Left ventricle myocardium inferior (tissue), 1 donor: ENCODE measurements at regions of chr20 and their contacts with region 1.

Region 1: DNA sequence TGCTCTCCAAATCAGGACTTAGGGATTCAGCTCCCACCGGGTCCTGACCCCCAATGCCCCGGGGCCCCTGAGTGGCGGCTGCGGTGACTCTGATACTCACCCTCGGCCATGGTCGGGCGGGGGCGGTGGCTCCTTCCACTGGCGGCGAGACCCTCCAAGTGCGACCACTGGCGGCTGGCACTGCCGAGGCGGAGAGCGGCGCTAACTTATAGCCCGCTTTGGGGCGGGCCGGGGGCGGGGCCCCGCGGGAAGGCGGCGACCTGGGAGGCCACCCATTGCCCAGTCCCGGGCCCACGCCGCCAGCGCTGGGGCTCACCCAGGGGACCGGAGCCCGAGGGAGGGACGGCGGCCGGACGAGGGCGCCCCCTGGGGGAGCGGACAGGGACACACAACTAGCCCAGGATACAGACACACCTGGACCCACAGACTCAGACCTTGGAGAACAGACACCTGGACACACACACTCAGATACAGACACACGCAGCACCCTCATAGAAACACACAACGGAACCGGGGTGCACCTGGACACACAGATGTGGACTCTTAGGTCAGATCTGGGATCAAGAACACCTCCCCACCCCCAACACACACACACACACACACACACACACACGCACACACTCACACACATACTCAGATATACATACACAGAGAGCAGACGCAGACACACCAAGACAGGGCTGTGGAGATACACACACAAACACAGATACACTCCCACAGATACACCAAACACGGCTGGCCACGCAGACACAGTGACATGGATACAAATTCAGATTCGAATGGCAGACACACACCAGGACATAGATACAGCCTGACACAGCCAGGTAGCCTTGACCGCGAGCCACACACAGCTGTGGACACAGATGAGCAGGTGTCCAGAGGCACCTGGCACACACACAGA is at the start of gene TGM2:
- DNase-seq: peak; percentile 86
- H3K4me3 ChIP-seq: peak within 1 kb of the TSS; percentile 81
- H3K27ac ChIP-seq: peak within 1 kb of the TSS; percentile 93
- H3K4me1 ChIP-seq: peaks cover 66% of the 10 kb centered on the region
- H3K27me3 ChIP-seq: no peaks in the 10 kb centered on the region
- CTCF ChIP-seq: peak; percentile 91
- total RNA-seq, gene TGM2: 846 TPM

Region 2: GRCh38 chr20:38057351-38057972 is 107.9 kb before region 1 on chr20:
- intact Hi-C with region 1: loop called (anchors 5 kb)
- DNase-seq: peak; percentile 86
- H3K4me3 ChIP-seq: no peak overlapping the region
- H3K27ac ChIP-seq: no peak overlapping the region
- H3K4me1 ChIP-seq: peaks cover 42% of the 10 kb centered on the region
- H3K27me3 ChIP-seq: no peaks in the 10 kb centered on the region
- CTCF ChIP-seq: peak; percentile 89

Region 3: DNA sequence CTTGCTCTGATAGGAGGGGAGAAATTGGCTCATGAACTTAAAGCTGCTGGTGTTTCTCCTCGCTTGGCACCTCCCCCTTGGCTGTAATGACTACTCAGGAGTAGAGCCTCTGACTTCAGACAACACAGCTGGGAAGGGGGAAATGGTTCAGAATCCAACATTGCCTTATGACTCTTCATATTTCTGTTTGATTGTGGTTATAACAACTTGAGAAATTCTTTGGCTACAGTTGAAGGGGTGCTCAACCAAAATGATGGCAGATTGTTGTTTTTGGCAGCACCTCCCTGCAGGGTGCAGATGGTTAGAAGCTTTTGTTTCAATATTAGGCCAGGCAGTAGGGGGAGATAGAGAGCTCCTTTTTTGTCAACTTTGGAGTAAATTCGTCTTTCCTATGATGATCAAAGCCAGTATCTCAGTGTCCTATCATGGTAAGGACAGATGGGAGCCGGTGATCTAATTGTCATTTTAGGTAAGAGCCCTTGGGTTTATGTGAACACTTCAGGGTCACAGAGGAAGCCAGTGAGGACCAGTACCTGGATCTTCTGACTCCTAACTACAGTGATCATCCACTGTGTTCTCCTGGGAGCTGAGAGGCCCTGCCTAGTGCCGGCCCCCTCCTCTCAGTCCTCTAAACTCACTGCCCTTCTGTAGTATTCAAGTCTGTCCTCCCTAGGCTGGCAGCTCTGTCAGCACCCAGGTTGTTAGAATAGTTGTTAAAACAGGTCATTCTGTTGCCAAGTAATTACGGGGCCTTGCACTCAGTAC is 91.8 kb before region 1 on chr20:
- intact Hi-C with region 1: loop called (anchors 5 kb)
- DNase-seq: peak; percentile 62
- H3K4me3 ChIP-seq: peak overlapping the region; percentile 2
- H3K27ac ChIP-seq: peak overlapping the region; percentile 91
- H3K4me1 ChIP-seq: peaks cover 58% of the 10 kb centered on the region
- H3K27me3 ChIP-seq: no peaks in the 10 kb centered on the region
- CTCF ChIP-seq: peak; percentile 83

Region 4: GRCh38 chr20:38350800-38351775 is 185.7 kb after region 1 on chr20:
- intact Hi-C with region 1: no loop called
- DNase-seq: peak; percentile 20
- H3K4me3 ChIP-seq: no peak overlapping the region
- H3K27ac ChIP-seq: no peak overlapping the region
- H3K4me1 ChIP-seq: no peaks in the 10 kb centered on the region
- H3K27me3 ChIP-seq: no peaks in the 10 kb centered on the region
- CTCF ChIP-seq: no peak

Region 5: GRCh38 chr20:39112178-39112743 is 946.9 kb after region 1 on chr20:
- intact Hi-C with region 1: no loop called
- DNase-seq: no peak
- H3K4me3 ChIP-seq: no peak overlapping the region
- H3K27ac ChIP-seq: no peak overlapping the region
- H3K4me1 ChIP-seq: peaks cover 5% of the 10 kb centered on the region
- H3K27me3 ChIP-seq: peaks cover 88% of the 10 kb centered on the region
- CTCF ChIP-seq: peak; percentile 73